Aorta (tissue), 5 donors: ENCODE measurements at regions of chr4 and their contacts with region 1.

Region 1: DNA sequence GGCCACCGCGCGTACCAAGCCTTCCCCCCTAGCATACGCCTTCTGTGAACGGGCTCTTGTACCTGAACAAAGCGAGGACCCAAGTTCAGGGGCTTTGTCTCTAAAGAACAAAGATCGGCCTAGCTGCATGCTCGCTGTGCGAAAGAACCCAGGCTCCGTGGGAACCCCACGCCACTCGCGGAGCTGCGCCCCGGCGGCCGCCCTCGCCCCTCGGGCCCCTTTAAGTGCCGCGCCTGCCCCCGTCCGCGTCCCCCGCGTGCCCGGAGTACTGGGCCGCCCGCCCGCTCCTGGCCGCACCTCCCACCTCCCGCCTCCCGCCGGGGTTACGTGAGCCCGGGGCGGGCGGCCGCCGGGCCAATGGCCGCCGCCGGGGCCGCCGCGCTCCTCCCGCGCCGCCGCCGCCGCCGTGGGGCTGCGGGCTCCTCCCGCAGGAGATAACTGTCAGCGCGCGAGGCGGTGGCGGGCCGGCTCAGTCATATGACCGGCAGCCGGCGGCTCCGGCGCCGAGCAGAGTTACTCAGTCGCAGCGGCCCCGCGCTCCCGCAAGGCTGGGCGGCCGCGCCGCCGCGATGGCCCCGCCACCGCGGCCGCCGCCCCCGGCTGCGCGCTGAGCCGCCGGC is at the start of gene FNIP2:
- DNase-seq: peak; percentile 85 to 92
- ATAC-seq: peak; percentile 93
- H3K4me3 ChIP-seq: peak within 1 kb of the TSS; percentile 85 to 89
- H3K27ac ChIP-seq: peak within 1 kb of the TSS; percentile 72 to 91
- H3K4me1 ChIP-seq: peaks cover 2 to 9% of the 10 kb centered on the region in 2 donors
- H3K27me3 ChIP-seq: no peaks in the 10 kb centered on the region
- total RNA-seq, gene FNIP2: 71.0 to 97.8 TPM

Region 2: DNA sequence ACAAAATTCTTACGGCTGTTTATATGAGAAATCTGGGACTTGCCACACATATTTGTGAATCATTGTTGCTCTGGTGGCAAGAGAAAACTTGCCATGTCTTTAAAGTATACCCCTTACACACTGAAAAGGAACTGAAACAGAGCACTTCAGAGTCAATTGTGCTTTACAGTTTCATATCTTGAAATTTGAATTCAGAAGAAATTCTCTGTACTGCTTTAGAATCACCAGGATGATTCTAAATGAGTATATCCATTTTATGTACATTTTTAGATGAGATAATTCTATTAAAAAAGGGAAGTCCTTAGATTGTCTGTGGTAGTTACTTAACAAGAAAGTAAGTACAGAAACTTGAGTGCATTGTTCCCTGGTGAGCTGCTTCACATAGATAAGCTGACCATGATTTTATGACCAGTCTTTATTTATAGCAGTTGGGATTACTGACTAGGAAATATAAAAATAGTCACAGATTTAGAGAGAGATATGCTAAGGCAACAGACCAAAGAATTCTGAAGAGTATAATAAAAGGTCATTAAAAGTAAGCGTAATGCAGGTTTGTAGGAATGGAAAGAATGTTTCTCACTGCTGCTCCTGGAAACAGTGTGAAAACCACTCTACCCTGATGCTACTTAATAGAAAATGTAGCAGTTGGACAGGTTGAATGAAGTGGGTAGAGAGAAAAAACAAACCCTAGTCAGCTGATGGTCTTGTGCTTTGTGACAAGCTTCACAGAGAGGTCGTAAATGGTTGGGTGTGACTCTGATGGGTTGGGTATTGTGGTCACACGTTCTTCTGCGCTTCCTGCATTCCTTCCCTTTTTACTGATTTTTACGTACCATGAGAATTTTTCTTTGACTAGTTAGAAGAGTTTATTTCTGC is 41.2 kb after region 1 on chr4:
- intact Hi-C with region 1: loop called in 1 of 2 experiments (anchors 5 kb)
- DNase-seq: no peak
- ATAC-seq: peak; percentile 85
- H3K4me3 ChIP-seq: no peak overlapping the region
- H3K27ac ChIP-seq: peak overlapping the region; percentile 80 to 96
- H3K4me1 ChIP-seq: peaks cover 2 to 5% of the 10 kb centered on the region in 2 donors
- H3K27me3 ChIP-seq: no peaks in the 10 kb centered on the region

Region 3: DNA sequence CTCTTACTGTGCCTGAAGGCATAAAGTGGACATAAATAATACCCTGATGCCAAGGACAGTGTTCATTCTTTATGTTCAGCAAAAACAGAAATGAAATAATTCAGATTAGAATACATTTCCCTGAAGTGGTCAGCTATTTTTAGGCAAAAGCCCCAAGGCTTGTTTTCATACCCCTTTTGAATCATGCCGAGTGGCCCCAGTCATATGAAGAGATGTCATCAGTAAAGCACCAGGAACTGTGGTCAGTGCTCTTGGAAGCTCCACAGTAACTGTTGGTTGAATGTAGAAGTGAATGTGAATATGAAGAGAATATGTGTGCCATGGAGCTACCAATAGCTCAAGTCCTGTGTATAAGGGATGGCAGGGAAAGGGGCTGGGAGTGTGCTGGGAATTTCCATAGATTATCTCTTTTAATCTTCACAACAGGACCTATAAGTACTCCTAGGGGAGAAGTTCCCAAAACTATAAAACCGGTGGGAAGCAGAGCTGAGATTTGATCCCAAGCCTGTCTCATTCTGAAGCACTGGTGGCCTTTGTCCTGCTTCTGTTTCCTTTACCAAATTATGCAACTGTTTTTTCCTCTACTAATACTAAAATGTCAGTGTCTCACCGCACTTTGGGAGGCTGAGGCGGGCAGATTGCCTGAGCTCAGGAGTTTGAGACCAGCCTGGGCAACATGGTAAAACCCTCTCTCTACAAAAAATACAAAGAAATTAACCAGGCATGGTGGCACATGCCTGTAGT is 52.7 kb after region 1 on chr4:
- intact Hi-C with region 1: loop called (anchors 5 kb)
- DNase-seq: peak in 1 of 2 donors; percentile 55
- ATAC-seq: no peak
- H3K4me3 ChIP-seq: no peak overlapping the region
- H3K27ac ChIP-seq: peak overlapping the region; percentile 33 to 79
- H3K4me1 ChIP-seq: peaks cover 9 to 22% of the 10 kb centered on the region in 2 donors
- H3K27me3 ChIP-seq: no peaks in the 10 kb centered on the region

Region 4: GRCh38 chr4:158850800-158851644 is 82.4 kb after region 1 on chr4:
- intact Hi-C with region 1: loop called in 1 of 2 experiments (anchors 5 kb)
- DNase-seq: no peak
- ATAC-seq: peak; percentile 44
- H3K4me3 ChIP-seq: no peak overlapping the region
- H3K27ac ChIP-seq: no peak overlapping the region
- H3K4me1 ChIP-seq: peaks cover 0 to 3% of the 10 kb centered on the region in 2 donors
- H3K27me3 ChIP-seq: no peaks in the 10 kb centered on the region